CD4-positive, alpha-beta T cell (primary cell): ENCODE measurements at regions of chr20 and their contacts with region 1.

Region 1: GRCh38 chr20:62010551-62011402 is 54.9 kb downstream of the TAF4 start:
- DNase-seq: peak; percentile 49 to 82 (median 60)
- ATAC-seq: peak; percentile 86
- H3K4me3 ChIP-seq: no peak overlapping the region
- H3K4me3 Mint-ChIP-seq: no peak overlapping the region
- H3K27ac ChIP-seq: no peak overlapping the region
- H3K27ac Mint-ChIP-seq: peak overlapping the region; percentile 24
- H3K4me1 ChIP-seq: peaks cover 4% of the 10 kb centered on the region
- H3K4me1 Mint-ChIP-seq: peaks cover 6% of the 10 kb centered on the region
- H3K27me3 ChIP-seq: no peaks in the 10 kb centered on the region
- H3K27me3 Mint-ChIP-seq: no peaks in the 10 kb centered on the region
- CTCF ChIP-seq: peak; percentile 80

Region 2: GRCh38 chr20:62025832-62026563 is 15.2 kb after region 1 on chr20:
- CTCF ChIA-PET with region 1: interaction called, 12 read pairs
- POLR2A ChIA-PET with region 1: no interaction called
- intact Hi-C with region 1: no loop called
- DNase-seq: peak in 8 of 14 experiments; percentile 7 to 66 (median 30)
- ATAC-seq: peak; percentile 79
- H3K4me3 ChIP-seq: no peak overlapping the region
- H3K4me3 Mint-ChIP-seq: peak overlapping the region; percentile 16
- H3K27ac ChIP-seq: no peak overlapping the region
- H3K27ac Mint-ChIP-seq: peak overlapping the region; percentile 70
- H3K4me1 ChIP-seq: peaks cover 35% of the 10 kb centered on the region
- H3K4me1 Mint-ChIP-seq: peaks cover 43% of the 10 kb centered on the region
- H3K27me3 ChIP-seq: no peaks in the 10 kb centered on the region
- H3K27me3 Mint-ChIP-seq: no peaks in the 10 kb centered on the region
- CTCF ChIP-seq: peak; percentile 57

Region 3: DNA sequence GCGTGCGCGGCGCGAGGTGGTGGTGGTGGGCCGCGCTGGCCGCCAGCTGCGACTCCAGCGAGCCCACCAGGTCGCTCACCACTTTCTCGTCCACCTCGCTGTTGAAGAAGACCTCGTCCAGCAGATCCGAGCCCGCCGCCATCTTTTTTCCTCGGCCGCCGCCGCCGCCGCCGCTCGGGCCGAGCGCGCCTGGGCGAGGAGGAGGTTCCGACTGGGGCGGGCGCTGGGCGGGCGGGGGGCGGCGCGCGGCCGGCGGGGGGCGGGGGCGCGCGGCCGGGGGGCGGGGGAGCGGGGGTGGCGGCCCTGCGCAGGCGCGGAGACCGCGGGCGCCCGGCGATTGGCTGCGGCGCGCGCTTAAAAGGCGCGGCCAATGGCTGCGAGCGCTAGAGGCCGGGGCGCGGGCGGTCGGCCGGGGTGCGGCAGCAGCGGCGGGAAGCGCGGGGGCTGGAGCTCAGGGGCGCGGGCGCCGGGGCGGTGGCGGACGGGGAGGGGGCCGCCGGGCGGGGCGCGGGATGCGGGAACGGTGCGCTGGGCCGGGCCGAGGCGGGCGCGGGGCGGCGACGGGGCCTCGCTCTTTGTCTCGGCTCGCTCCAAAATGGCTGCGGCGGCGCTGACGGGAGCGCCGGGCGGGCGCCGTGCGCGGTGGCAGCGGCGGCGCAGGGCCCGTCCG is 55.0 kb after region 1 on chr20 and contains the start of gene TAF4:
- CTCF ChIA-PET with region 1: interaction called, 5 read pairs
- POLR2A ChIA-PET with region 1: interaction called, 14 read pairs
- intact Hi-C with region 1: loop called (anchors 2 to 10 kb)
- DNase-seq: peak; percentile 58 to 95 (median 80)
- ATAC-seq: peak; percentile 74
- H3K4me3 ChIP-seq: peak within 1 kb of the TSS; percentile 77
- H3K4me3 Mint-ChIP-seq: peak within 1 kb of the TSS; percentile 96
- H3K27ac ChIP-seq: peak within 1 kb of the TSS; percentile 15 to 70
- H3K27ac Mint-ChIP-seq: peak within 1 kb of the TSS; percentile 98
- H3K4me1 ChIP-seq: peaks cover 46% of the 10 kb centered on the region
- H3K4me1 Mint-ChIP-seq: peaks cover 51% of the 10 kb centered on the region
- H3K27me3 ChIP-seq: no peaks in the 10 kb centered on the region
- H3K27me3 Mint-ChIP-seq: no peaks in the 10 kb centered on the region
- CTCF ChIP-seq: no peak
- total RNA-seq, gene TAF4: 11.1 to 12.5 TPM

Region 4: GRCh38 chr20:62136283-62137091 is 125.7 kb after region 1 on chr20:
- CTCF ChIA-PET with region 1: interaction called, 18 read pairs
- POLR2A ChIA-PET with region 1: interaction called, 9 read pairs
- intact Hi-C with region 1: loop called (anchors 1 kb)
- DNase-seq: peak; percentile 63 to 89 (median 75)
- ATAC-seq: peak; percentile 70
- H3K4me3 ChIP-seq: no peak overlapping the region
- H3K4me3 Mint-ChIP-seq: peak overlapping the region; percentile 66
- H3K27ac ChIP-seq: no peak overlapping the region
- H3K27ac Mint-ChIP-seq: peak overlapping the region; percentile 77
- H3K4me1 ChIP-seq: peaks cover 48% of the 10 kb centered on the region
- H3K4me1 Mint-ChIP-seq: peaks cover 56% of the 10 kb centered on the region
- H3K27me3 ChIP-seq: no peaks in the 10 kb centered on the region
- H3K27me3 Mint-ChIP-seq: no peaks in the 10 kb centered on the region
- CTCF ChIP-seq: peak; percentile 76

Region 5: DNA sequence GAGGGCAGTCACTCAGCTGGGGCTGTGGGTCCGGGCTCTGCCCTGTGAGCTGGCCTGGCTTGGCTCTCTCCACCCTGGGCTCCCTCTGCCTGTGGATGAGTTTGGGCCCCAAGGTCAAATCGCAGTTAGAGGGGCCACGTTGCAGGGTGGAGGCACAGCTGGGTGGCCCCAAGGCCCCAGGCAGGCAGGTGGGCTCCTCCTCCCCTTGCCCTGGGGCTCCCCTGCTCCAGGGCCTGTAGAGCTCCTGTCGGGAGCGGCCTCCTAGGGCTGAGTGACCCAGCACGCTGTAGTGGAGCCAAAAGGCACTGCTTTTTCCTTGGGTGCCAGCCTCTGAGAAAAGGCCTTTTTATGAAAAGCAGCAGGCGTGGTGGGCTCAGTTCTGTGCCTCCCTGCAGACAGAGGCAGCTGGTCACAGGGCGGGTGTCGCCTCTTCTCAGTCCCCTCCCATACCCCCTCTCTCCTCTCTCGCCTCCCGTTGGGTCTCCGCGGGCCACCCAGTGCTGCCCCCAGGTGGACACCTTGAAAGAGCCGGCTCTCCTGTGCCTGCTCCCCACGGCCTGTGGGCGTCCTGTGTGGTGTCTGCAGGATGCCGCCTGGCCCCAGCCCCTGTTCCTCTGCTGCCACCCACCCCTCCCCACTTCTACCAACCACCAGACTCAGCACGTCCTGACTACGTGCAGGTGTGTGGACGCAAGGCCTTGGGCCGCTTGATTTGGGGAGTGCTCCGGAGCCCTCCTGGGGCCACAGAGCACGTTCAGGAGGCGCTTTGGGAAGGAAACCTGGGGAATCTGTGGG is 146.0 kb after region 1 on chr20:
- CTCF ChIA-PET with region 1: interaction called, 5 read pairs
- POLR2A ChIA-PET with region 1: no interaction called
- intact Hi-C with region 1: loop called (anchors 1 kb)
- DNase-seq: peak; percentile 55 to 84 (median 66)
- ATAC-seq: peak; percentile 91
- H3K4me3 ChIP-seq: no peak overlapping the region
- H3K4me3 Mint-ChIP-seq: no peak overlapping the region
- H3K27ac ChIP-seq: no peak overlapping the region
- H3K27ac Mint-ChIP-seq: no peak overlapping the region
- H3K4me1 ChIP-seq: peaks cover 23% of the 10 kb centered on the region
- H3K4me1 Mint-ChIP-seq: peaks cover 22% of the 10 kb centered on the region
- H3K27me3 ChIP-seq: no peaks in the 10 kb centered on the region
- H3K27me3 Mint-ChIP-seq: no peaks in the 10 kb centered on the region
- CTCF ChIP-seq: peak; percentile 61

Region 6: GRCh38 chr20:62386383-62387218 is 375.8 kb after region 1 on chr20 and contains the start of gene RPS21:
- CTCF ChIA-PET with region 1: interaction called, 5 read pairs
- POLR2A ChIA-PET with region 1: interaction called, 6 read pairs
- intact Hi-C with region 1: loop called in 1 of 2 experiments (anchors 1 kb)
- DNase-seq: peak; percentile 89 to 97 (median 92)
- ATAC-seq: peak; percentile 87
- H3K4me3 ChIP-seq: peak within 1 kb of the TSS; percentile 91
- H3K4me3 Mint-ChIP-seq: peak within 1 kb of the TSS; percentile 95
- H3K27ac ChIP-seq: peak within 1 kb of the TSS; percentile 84 to 94
- H3K27ac Mint-ChIP-seq: peak within 1 kb of the TSS; percentile 91
- H3K4me1 ChIP-seq: peaks cover 39% of the 10 kb centered on the region
- H3K4me1 Mint-ChIP-seq: peaks cover 58% of the 10 kb centered on the region
- H3K27me3 ChIP-seq: no peaks in the 10 kb centered on the region
- H3K27me3 Mint-ChIP-seq: no peaks in the 10 kb centered on the region
- CTCF ChIP-seq: no peak
- total RNA-seq, gene RPS21: 3,015 to 3,210 TPM

Region 7: GRCh38 chr20:62500237-62500864 is 489.6 kb after region 1 on chr20:
- CTCF ChIA-PET with region 1: no interaction called
- POLR2A ChIA-PET with region 1: no interaction called
- intact Hi-C with region 1: loop called in 1 of 2 experiments (anchors 10 kb)
- DNase-seq: peak; percentile 70 to 88 (median 79)
- ATAC-seq: peak; percentile 72
- H3K4me3 ChIP-seq: no peak overlapping the region
- H3K4me3 Mint-ChIP-seq: no peak overlapping the region
- H3K27ac ChIP-seq: no peak overlapping the region
- H3K27ac Mint-ChIP-seq: no peak overlapping the region
- H3K4me1 ChIP-seq: peaks cover 25% of the 10 kb centered on the region
- H3K4me1 Mint-ChIP-seq: peaks cover 12% of the 10 kb centered on the region
- H3K27me3 ChIP-seq: peaks cover 0 to 4% of the 10 kb centered on the region in 2 experiments
- H3K27me3 Mint-ChIP-seq: no peaks in the 10 kb centered on the region
- CTCF ChIP-seq: peak; percentile 71